ENCODE measurements at regions of chr17 and their contacts with region 1.

Region 1: DNA sequence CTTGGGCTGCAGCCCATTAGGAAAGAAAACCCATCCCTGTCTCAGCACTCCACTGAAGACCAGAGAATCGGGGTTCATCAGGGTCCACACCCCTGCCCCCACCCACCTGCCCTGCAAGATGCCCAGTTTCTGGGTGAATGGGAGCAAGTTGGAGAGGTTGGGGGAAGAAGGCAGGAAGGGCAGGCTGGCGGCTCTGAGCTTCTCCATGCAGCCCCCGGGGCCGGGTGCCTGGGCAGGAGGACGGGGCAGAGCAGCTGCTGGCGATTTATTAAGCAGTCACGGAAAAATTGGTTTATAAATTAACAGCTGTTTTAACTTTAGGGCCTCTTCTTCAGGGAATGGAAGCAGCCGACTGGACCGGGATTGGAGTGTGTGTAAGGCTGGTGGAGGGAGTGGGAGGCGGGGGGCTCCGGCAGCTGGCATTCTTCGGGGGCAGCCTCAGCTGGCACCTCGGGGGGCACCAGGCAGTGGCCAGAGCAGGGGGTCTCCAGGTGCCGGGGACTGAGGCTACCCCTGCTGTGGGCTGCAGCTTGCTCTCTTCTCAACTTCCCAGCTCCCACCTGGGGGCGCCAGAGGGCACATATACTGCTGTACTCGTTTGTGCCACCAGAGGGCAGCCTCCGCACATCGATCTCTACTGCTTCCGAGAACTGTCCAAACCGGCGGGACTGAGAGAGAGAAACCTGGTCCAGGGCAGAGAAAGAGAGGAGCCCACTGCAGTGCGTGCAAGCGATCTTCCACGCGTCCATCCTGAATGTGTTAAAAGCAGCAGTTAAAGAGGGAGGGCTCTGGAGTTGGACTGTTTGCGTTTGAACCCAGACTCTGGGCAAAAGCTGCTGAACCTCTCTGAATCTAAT is 5.0 kb upstream of the PPP1R1B start:
- DNase-seq: peak; percentile 91
- ATAC-seq: peak; percentile 51
- H3K4me3 Mint-ChIP-seq: no peak overlapping the region
- H3K27ac Mint-ChIP-seq: no peak overlapping the region
- H3K4me1 Mint-ChIP-seq: peaks cover 31% of the 10 kb centered on the region
- H3K27me3 Mint-ChIP-seq: peaks cover 82% of the 10 kb centered on the region
- CTCF ChIP-seq: peak; percentile 100

Region 2: DNA sequence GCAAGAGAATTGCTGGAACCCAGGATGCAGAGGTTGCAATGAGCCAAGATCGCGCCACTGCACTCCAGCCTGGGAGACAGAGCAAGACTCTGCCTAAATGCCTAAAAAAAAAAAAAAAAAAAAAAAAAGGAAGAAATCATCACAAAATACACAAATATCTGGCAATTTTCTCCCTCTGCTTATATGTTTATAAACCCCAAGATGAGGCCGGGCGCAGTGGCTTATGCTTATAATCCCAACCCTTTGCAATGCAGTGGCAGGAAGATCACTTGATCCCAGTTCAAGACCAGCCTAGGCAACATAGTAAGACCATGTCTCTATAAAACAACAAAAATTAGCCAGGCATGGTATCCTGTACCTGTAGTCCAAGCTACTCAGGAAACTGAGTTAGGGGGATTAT is 192.2 kb before region 1 on chr17:
- CTCF ChIA-PET with region 1: no interaction called
- POLR2A ChIA-PET with region 1: no interaction called
- DNase-seq: no peak
- ATAC-seq: no peak
- H3K4me3 Mint-ChIP-seq: no peak overlapping the region
- H3K27ac Mint-ChIP-seq: no peak overlapping the region
- H3K4me1 Mint-ChIP-seq: no peaks in the 10 kb centered on the region
- H3K27me3 Mint-ChIP-seq: no peaks in the 10 kb centered on the region
- CTCF ChIP-seq: no peak

Region 3: DNA sequence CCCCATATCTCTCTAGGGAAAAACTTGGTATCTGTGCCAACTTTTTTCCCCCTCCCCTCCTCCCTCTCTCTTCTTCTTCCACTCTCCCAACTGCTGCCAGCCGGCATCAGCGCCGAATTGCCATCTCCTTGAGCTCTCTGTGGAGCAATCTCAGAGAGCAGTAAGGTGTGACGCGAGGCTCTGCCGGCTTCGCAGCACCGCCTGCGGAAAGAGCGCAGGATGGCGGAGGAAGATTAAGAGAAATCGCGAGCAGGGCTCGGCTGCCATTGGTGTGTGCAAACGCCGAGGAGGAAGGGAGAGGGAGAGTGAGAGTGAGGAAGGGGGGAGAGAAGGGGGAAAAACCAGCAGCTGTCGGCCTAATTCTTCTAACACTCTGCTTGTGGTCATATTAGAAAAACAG is 58.3 kb before region 1 on chr17:
- CTCF ChIA-PET with region 1: interaction called, 50 read pairs
- POLR2A ChIA-PET with region 1: no interaction called
- DNase-seq: peak; percentile 46
- ATAC-seq: peak; percentile 59
- H3K4me3 Mint-ChIP-seq: peak overlapping the region; percentile 56
- H3K27ac Mint-ChIP-seq: no peak overlapping the region
- H3K4me1 Mint-ChIP-seq: peaks cover 26% of the 10 kb centered on the region
- H3K27me3 Mint-ChIP-seq: no peaks in the 10 kb centered on the region
- CTCF ChIP-seq: no peak

Region 4: DNA sequence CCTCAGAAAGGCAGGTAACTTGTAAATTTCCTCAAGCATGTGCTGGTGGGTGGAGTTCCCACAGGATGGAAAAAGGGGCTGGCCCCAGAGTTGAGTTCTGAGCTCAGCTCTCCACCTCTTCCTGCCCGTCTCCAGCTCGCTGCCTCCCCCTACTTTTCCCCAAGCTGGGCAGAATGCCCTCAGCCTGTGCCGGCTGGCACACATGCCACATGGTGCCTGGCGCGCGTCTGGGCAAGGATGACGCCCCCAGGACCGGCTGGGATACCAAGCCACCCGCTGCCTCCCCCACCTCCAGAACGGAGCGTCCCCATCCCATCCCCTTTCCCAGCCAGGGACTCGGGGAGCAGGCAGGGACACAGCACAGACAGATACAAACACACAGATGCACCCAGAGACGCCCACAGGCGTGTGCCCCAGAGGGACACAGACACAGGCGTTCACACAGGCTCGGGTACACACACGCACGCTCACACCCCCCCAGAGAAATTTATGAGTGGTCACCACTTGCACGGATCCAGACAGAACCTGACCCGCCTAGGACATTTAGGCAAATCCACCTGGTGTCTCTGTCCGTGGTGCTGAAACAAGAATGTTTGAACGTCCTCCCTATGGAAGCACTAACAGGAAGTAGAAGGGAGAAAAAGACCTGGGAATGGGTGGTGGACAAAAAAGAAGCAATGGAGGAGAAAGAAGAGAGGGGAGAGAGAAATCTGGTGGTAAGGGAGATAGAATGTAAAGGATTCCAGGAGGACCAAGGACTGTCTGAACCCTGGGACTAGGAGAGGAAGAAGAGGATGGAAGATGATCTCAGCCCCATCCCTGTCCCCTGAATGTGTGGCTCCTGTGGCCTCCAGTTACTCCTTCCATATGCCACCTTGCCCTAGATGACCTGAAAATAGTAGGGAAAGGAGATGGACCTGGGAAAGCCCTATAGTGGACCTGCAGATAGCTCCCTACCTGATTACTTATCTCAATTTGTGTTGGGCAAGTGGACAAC is 29.5 kb before region 1 on chr17:
- CTCF ChIA-PET with region 1: interaction called, 13 read pairs
- POLR2A ChIA-PET with region 1: no interaction called
- DNase-seq: peak; percentile 84
- ATAC-seq: peak; percentile 69
- H3K4me3 Mint-ChIP-seq: peak overlapping the region; percentile 46
- H3K27ac Mint-ChIP-seq: no peak overlapping the region
- H3K4me1 Mint-ChIP-seq: peaks cover 29% of the 10 kb centered on the region
- H3K27me3 Mint-ChIP-seq: peaks cover 77% of the 10 kb centered on the region
- CTCF ChIP-seq: no peak

Region 5: DNA sequence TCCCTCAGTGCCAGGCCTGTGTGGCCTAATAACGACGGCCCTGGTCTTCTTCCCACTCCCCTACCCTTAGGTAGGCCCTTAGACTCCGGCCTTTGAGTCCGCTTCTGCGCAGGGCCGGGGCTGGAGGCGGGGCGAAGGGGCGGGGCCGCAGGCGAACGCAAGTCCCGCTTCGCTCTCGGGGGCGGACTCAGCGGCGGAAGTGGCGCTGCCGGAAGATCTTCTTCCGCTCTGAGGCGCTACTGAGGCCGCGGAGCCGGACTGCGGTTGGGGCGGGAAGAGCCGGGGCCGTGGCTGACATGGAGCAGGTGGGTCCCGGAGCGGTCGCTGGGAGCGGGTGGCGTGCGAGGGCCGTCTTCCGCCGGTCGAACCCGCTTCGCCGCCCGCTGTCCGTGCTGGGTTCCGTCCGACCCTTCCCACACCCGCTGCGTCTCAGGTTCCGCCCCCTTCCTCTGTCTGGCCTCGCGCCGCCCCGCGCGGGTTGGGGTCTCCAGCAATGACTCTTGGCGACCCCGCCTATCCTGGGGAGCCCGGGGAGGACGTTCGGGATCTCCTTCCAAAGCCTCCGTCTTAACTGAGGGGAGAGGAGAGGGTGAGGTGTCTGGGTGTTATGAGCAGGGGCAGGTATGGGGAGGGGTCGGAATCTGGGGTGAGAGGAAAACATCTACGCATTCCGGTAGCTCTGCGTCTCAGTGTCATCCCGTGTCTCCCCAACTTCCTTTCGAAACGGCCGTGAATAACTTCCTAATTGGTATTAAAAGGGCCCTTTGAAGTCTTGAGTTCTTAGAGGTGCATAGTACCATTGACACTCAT is 15.4 kb after region 1 on chr17 and contains the start of gene STARD3:
- CTCF ChIA-PET with region 1: interaction called, 851 read pairs
- POLR2A ChIA-PET with region 1: no interaction called
- DNase-seq: peak; percentile 94
- ATAC-seq: peak; percentile 72
- H3K4me3 Mint-ChIP-seq: peak within 1 kb of the TSS; percentile 76
- H3K27ac Mint-ChIP-seq: peak within 1 kb of the TSS; percentile 64
- H3K4me1 Mint-ChIP-seq: peaks cover 70% of the 10 kb centered on the region
- H3K27me3 Mint-ChIP-seq: no peaks in the 10 kb centered on the region
- CTCF ChIP-seq: no peak
- total RNA-seq, gene STARD3: 64.9 to 75.3 TPM (median 65.4 TPM) in 3 replicates

Region 6: GRCh38 chr17:39677542-39678339 is 56.0 kb after region 1 on chr17:
- CTCF ChIA-PET with region 1: interaction called, 876 read pairs
- POLR2A ChIA-PET with region 1: interaction called, 4 read pairs
- DNase-seq: no peak
- ATAC-seq: no peak
- H3K4me3 Mint-ChIP-seq: no peak overlapping the region
- H3K27ac Mint-ChIP-seq: no peak overlapping the region
- H3K4me1 Mint-ChIP-seq: peaks cover 22% of the 10 kb centered on the region
- H3K27me3 Mint-ChIP-seq: no peaks in the 10 kb centered on the region
- CTCF ChIP-seq: no peak

Region 7: GRCh38 chr17:39704821-39705551 is 83.2 kb after region 1 on chr17:
- CTCF ChIA-PET with region 1: interaction called, 27 read pairs
- POLR2A ChIA-PET with region 1: no interaction called
- DNase-seq: peak; percentile 38
- ATAC-seq: peak; percentile 62
- H3K4me3 Mint-ChIP-seq: no peak overlapping the region; the same call in 1 of the 2 replicates
- H3K27ac Mint-ChIP-seq: peak overlapping the region; percentile 92
- H3K4me1 Mint-ChIP-seq: peaks cover 51% of the 10 kb centered on the region
- H3K27me3 Mint-ChIP-seq: no peaks in the 10 kb centered on the region
- CTCF ChIP-seq: no peak